Activated B cell treated with CpG ODN at 0.5 μM for 24 hours (primary cell): ENCODE measurements at regions of chr7 and their contacts with region 1.

Region 1: DNA sequence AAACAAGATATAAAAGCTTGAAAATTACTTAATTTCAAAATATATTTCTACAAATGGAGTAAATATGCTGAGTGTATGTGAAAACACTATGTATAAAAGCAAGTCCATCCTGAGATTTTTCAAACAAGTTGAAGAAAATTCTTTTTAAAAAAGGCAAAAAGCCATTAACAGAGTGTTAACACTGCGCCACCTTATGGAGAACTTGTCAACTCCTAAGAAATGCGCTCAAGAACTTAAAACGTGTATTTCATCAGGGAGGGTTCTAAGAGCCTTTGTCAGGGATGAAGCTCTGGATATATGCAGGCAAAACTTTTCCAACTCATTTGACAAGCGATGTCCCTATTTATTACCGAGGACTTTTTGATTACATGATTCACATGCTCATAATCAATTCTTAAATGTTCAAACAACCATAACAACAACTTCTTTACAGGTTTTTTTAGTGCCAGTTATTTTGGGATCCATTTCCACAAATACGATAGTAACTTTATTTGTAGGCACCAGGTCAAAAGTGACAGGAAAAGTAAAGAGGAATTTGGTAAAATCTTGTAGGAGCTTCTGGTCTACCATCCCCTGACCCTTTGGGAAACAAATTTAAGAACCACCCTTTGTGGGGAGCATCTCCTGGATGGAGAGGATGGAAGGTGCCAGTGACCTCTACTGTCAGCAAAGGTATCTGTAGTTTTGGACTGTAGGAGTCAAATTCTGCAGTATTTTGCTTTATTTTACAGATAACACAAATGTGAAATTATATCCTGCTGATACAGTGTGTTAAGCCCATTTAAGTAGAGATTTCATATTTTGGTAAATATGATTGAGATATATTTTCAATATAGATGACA is 23.2 kb downstream of the CALCR start:
- DNase-seq: no peak
- ATAC-seq: no peak
- H3K4me3 Mint-ChIP-seq: no peak overlapping the region
- H3K27ac Mint-ChIP-seq: no peak overlapping the region
- H3K4me1 Mint-ChIP-seq: no peaks in the 10 kb centered on the region
- H3K27me3 Mint-ChIP-seq: peaks cover 8% of the 10 kb centered on the region
- CTCF ChIP-seq: no peak

Region 2: GRCh38 chr7:93092757-93093370 is 458.4 kb before region 1 on chr7:
- CTCF ChIA-PET with region 1: no interaction called
- POLR2A ChIA-PET with region 1: no interaction called
- intact Hi-C with region 1: loop called (anchors 2 kb)
- DNase-seq: no peak
- ATAC-seq: peak; percentile 42
- H3K4me3 Mint-ChIP-seq: no peak overlapping the region
- H3K27ac Mint-ChIP-seq: no peak overlapping the region
- H3K4me1 Mint-ChIP-seq: no peaks in the 10 kb centered on the region
- H3K27me3 Mint-ChIP-seq: peaks cover 13% of the 10 kb centered on the region
- CTCF ChIP-seq: no peak

Region 3: DNA sequence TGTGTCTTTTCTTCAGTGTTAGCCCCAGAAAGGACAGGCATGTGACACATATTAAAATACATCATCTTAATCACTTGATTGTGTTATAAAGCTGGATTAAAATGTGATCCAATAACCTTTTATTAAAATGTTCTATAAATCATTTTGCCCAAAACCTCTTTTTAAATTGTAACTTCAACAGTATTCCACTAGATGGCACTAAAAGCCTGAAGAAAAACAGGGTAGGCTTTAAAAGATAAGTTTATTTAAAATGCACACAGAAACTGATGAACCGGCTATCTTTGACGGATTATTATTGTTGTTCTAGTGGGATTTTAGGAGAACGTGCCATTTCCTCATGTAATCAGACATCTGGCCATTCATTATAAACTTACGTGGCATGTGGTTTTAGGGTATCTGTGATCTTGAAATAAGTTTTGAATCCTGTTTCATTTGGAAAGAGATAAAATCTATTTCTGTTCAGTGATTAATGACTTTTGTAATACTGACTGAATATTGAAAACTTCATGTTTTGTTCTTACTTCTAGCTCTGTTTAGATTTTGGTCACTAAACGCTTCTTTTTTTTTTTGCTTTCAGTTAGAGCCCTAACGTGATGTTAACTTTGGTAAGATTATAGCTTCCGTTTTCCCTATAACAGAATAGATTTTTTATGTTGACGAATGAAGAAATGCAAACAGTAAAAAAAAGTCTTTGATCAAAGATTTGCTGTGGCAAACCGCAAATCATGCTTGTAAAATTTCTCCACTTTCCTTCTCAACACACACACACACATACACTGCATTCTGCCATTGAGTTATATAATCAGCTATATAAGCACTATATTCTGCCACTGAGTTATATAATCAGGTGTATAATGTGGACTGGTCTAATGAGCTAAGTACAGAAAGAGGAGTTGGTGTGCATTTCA is 305.5 kb before region 1 on chr7:
- CTCF ChIA-PET with region 1: interaction called, 24 read pairs
- POLR2A ChIA-PET with region 1: no interaction called
- intact Hi-C with region 1: loop called (anchors 1 kb)
- DNase-seq: no peak
- ATAC-seq: peak; percentile 25
- H3K4me3 Mint-ChIP-seq: no peak overlapping the region
- H3K27ac Mint-ChIP-seq: no peak overlapping the region
- H3K4me1 Mint-ChIP-seq: peaks cover 2% of the 10 kb centered on the region
- H3K27me3 Mint-ChIP-seq: no peaks in the 10 kb centered on the region
- CTCF ChIP-seq: peak; percentile 42

Region 4: GRCh38 chr7:93442478-93443224 is 108.6 kb before region 1 on chr7:
- CTCF ChIA-PET with region 1: no interaction called
- POLR2A ChIA-PET with region 1: no interaction called
- intact Hi-C with region 1: loop called (anchors 2 kb)
- DNase-seq: no peak
- ATAC-seq: peak; percentile 54
- H3K4me3 Mint-ChIP-seq: no peak overlapping the region
- H3K27ac Mint-ChIP-seq: no peak overlapping the region
- H3K4me1 Mint-ChIP-seq: no peaks in the 10 kb centered on the region
- H3K27me3 Mint-ChIP-seq: peaks cover 6% of the 10 kb centered on the region
- CTCF ChIP-seq: no peak

Region 5: GRCh38 chr7:93563584-93563983 is 12.3 kb after region 1 on chr7:
- CTCF ChIA-PET with region 1: interaction called, 12 read pairs
- POLR2A ChIA-PET with region 1: no interaction called
- intact Hi-C with region 1: no loop called
- DNase-seq: no peak
- ATAC-seq: peak; percentile 40
- H3K4me3 Mint-ChIP-seq: no peak overlapping the region
- H3K27ac Mint-ChIP-seq: peak overlapping the region; percentile 50
- H3K4me1 Mint-ChIP-seq: peaks cover 33% of the 10 kb centered on the region
- H3K27me3 Mint-ChIP-seq: no peaks in the 10 kb centered on the region
- CTCF ChIP-seq: no peak